T-cell (primary cell): ENCODE measurements at regions of chr3 and their contacts with region 1.

Region 1: GRCh38 chr3:152268555-152269425 is at the start of gene MBNL1:
- DNase-seq: peak; percentile 74 to 93 (median 82)
- ATAC-seq: peak; percentile 71 to 80 (median 78)
- H3K4me3 ChIP-seq: peak within 1 kb of the TSS; percentile 77 to 99
- H3K4me3 Mint-ChIP-seq: peak within 1 kb of the TSS; percentile 85 to 99 (median 86)
- H3K27ac ChIP-seq: peak within 1 kb of the TSS; percentile 95
- H3K27ac Mint-ChIP-seq: peak within 1 kb of the TSS; percentile 94
- H3K4me1 ChIP-seq: peaks cover 21 to 58% of the 10 kb centered on the region in 2 experiments
- H3K4me1 Mint-ChIP-seq: peaks cover 62 to 76% (median 63%) of the 10 kb centered on the region in 3 donors
- H3K27me3 ChIP-seq: no peaks in the 10 kb centered on the region
- H3K27me3 Mint-ChIP-seq: no peaks in the 10 kb centered on the region
- total RNA-seq, gene MBNL1: 408 to 705 (median 423) TPM

Region 2: DNA sequence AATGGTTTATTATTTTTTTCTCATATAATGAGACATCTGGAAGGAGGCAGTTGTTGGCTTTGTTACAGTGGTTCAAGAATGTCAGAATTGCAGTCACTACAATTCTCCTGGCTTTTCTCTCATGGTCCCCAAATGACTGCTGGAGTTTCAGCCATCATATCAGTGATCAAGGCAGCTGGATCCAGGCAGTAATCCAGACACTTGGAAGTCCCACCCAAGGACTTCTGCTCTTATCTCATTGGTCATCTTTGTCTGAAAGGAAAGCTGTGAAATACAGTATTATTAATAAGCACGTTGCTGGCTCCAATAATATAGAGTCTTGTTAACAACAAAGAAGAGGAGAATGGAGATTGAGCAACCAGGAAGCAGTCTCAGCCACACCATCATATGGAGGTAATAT is 1206.2 kb before region 1 on chr3:
- CTCF ChIA-PET with region 1: no interaction called
- POLR2A ChIA-PET with region 1: no interaction called
- DNase-seq: no peak
- ATAC-seq: no peak
- H3K4me3 ChIP-seq: no peak overlapping the region
- H3K4me3 Mint-ChIP-seq: no peak overlapping the region
- H3K27ac ChIP-seq: no peak overlapping the region
- H3K27ac Mint-ChIP-seq: no peak overlapping the region
- H3K4me1 ChIP-seq: no peaks in the 10 kb centered on the region
- H3K4me1 Mint-ChIP-seq: no peaks in the 10 kb centered on the region
- H3K27me3 ChIP-seq: peaks cover 0 to 3% of the 10 kb centered on the region in 2 experiments
- H3K27me3 Mint-ChIP-seq: peaks cover 6 to 21% of the 10 kb centered on the region in 2 donors

Region 3: DNA sequence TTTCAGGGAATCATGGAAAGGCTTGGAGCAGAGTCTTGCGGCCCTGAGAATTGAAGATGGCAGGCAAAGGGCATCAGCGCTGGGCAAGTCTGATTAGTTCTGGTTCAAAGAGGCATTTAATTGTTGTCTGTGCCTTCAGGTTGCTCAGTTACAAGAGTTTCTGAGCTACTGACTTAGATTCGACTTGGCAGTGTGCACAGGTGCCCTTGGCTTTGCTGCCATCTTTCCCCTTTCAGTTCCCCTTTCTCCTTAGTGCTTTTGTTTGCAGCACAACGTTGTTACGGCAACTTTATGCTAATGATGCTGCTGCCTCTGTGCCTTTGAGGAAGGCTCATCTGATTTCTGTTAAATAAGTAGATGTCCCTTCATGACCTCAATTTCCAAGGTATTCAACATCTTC is 1002.9 kb before region 1 on chr3:
- CTCF ChIA-PET with region 1: no interaction called
- POLR2A ChIA-PET with region 1: no interaction called
- DNase-seq: peak in 3 of 35 experiments; percentile 3 to 48 (median 6)
- ATAC-seq: peak in 1 of 4 experiments; percentile 42
- H3K4me3 ChIP-seq: no peak overlapping the region
- H3K4me3 Mint-ChIP-seq: no peak overlapping the region
- H3K27ac ChIP-seq: no peak overlapping the region
- H3K27ac Mint-ChIP-seq: no peak overlapping the region
- H3K4me1 ChIP-seq: peaks cover 4 to 5% of the 10 kb centered on the region in 2 experiments
- H3K4me1 Mint-ChIP-seq: peaks cover 13 to 30% (median 18%) of the 10 kb centered on the region in 3 donors
- H3K27me3 ChIP-seq: no peaks in the 10 kb centered on the region
- H3K27me3 Mint-ChIP-seq: peaks cover 1 to 3% of the 10 kb centered on the region in 2 donors

Region 4: DNA sequence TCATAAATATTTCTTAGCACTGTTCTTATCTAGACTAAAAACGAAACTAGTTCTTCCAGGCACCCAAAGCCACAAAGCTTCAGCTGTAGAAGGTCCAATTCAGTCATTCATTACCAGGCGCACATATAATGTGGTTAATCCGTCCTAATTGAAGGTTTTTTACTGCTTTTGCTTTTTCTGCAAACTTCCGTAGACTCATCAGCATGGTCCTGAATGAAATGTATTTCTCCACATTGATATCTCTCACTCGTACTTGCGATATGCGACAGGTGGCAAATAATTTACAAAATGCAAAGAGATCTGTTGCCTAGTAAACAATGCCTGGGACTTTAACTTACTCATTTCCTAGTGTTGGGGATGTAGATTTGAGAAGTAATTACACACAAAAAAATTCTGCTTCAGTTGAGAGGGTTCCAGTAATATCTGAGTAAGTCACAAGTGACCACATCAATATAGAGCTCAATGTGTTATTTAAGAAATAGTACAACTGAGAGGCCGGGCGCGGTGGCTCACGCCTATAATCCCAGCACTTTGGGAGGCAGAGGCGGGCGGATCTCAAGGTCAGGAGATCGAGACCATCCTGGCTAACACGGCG is 75.0 kb before region 1 on chr3:
- CTCF ChIA-PET with region 1: interaction called in 1 of 2 experiments, 6 read pairs
- POLR2A ChIA-PET with region 1: interaction called in 1 of 2 experiments, 23 read pairs
- DNase-seq: peak in 12 of 35 experiments; percentile 11 to 74 (median 30)
- ATAC-seq: peak; percentile 62 to 70 (median 66)
- H3K4me3 ChIP-seq: peak overlapping the region; percentile 42 to 66
- H3K4me3 Mint-ChIP-seq: peak overlapping the region; percentile 71 to 83 (median 79)
- H3K27ac ChIP-seq: peak overlapping the region; percentile 70
- H3K27ac Mint-ChIP-seq: peak overlapping the region; percentile 90 to 98
- H3K4me1 ChIP-seq: peaks cover 33 to 41% of the 10 kb centered on the region in 2 experiments
- H3K4me1 Mint-ChIP-seq: peaks cover 81 to 91% (median 85%) of the 10 kb centered on the region in 3 donors
- H3K27me3 ChIP-seq: no peaks in the 10 kb centered on the region
- H3K27me3 Mint-ChIP-seq: no peaks in the 10 kb centered on the region

Region 5: DNA sequence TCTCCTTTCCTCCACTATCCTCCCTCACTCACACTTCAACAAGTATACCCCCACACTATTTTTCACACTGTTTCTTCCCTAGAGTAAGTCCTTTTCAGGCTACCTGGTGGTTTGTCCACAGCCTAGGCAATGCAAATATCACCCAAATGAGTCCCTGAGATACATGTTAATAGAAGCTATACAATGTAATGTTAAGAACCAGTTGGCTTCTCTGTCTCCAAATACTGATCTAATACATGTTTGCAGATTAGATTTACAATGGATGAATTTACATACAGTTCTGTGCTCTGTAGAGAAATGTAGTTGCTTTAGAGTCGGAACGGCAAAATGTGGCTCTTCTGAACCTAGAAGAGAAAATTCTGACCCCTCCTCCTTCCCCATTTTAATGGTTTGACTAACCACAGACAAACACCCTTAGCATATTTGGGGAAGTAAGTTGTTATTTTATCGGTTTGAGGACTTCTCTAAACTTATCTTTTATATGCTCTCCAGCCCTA is 63.6 kb before region 1 on chr3:
- CTCF ChIA-PET with region 1: no interaction called
- POLR2A ChIA-PET with region 1: interaction called, 13 to 23 read pairs
- DNase-seq: peak in 2 of 35 experiments; percentile 29 to 56
- ATAC-seq: peak; percentile 36 to 63 (median 54)
- H3K4me3 ChIP-seq: peak overlapping the region; percentile 2 to 50
- H3K4me3 Mint-ChIP-seq: peak overlapping the region; percentile 83 to 95 (median 83)
- H3K27ac ChIP-seq: peak overlapping the region; percentile 78
- H3K27ac Mint-ChIP-seq: peak overlapping the region; percentile 97 to 100
- H3K4me1 ChIP-seq: peaks cover 12 to 51% of the 10 kb centered on the region in 2 experiments
- H3K4me1 Mint-ChIP-seq: peaks cover 76 to 84% (median 76%) of the 10 kb centered on the region in 3 donors
- H3K27me3 ChIP-seq: no peaks in the 10 kb centered on the region
- H3K27me3 Mint-ChIP-seq: no peaks in the 10 kb centered on the region

Region 6: DNA sequence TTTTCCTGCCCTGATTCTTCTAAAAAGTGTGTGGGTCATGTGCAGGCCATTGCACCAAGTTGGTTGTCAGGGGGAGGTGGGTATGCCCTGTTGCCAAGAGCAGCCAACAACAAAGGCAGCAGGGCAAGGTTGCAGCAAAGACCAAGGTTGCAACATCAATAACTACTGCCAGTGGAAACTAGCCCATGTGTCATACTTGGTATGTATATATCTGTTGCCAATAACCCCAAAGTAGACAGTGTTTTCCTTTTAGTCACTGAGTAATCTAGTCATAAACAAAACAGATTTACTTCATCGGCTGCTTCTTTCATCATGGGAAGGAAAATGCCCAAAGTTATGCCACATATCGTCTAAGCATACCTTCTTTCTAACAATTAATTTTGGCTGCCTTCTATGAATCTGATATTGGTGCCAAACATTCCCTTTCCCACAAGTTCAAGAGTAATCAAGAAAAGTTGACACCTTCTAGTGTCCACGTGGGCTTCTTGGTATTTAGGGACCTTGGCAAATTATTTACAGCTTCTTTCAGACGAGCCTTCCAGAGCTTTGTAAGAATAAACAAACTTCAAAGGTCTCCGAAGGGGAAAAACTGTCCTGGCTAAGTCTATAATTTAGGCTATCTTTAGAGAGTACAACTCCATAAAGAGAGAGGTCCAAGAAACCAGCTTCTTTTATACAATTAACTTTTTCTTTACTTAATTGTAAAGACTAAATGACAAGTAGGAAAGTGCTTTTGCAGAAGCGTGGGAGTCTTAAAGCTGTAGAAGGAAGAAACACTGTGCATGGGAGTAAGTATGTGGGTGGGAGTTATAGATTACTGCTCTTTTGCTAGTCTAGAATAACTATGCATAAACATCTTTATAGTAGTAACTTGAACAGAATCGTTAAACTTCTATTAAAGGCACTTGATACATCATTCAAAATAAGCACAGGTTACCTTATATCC is 10.1 kb before region 1 on chr3:
- CTCF ChIA-PET with region 1: interaction called in 1 of 2 experiments, 17 read pairs
- POLR2A ChIA-PET with region 1: interaction called, 4 to 51 read pairs
- DNase-seq: peak in 31 of 35 experiments; percentile 22 to 73 (median 50)
- ATAC-seq: peak; percentile 46 to 76 (median 53)
- H3K4me3 ChIP-seq: peak overlapping the region; percentile 16 to 29
- H3K4me3 Mint-ChIP-seq: peak overlapping the region; percentile 63 to 72 (median 64)
- H3K27ac ChIP-seq: peak overlapping the region; percentile 94
- H3K27ac Mint-ChIP-seq: peak overlapping the region; percentile 97
- H3K4me1 ChIP-seq: peaks cover 53 to 72% of the 10 kb centered on the region in 2 experiments
- H3K4me1 Mint-ChIP-seq: peaks cover 87 to 92% (median 90%) of the 10 kb centered on the region in 3 donors
- H3K27me3 ChIP-seq: no peaks in the 10 kb centered on the region
- H3K27me3 Mint-ChIP-seq: no peaks in the 10 kb centered on the region

Region 7: DNA sequence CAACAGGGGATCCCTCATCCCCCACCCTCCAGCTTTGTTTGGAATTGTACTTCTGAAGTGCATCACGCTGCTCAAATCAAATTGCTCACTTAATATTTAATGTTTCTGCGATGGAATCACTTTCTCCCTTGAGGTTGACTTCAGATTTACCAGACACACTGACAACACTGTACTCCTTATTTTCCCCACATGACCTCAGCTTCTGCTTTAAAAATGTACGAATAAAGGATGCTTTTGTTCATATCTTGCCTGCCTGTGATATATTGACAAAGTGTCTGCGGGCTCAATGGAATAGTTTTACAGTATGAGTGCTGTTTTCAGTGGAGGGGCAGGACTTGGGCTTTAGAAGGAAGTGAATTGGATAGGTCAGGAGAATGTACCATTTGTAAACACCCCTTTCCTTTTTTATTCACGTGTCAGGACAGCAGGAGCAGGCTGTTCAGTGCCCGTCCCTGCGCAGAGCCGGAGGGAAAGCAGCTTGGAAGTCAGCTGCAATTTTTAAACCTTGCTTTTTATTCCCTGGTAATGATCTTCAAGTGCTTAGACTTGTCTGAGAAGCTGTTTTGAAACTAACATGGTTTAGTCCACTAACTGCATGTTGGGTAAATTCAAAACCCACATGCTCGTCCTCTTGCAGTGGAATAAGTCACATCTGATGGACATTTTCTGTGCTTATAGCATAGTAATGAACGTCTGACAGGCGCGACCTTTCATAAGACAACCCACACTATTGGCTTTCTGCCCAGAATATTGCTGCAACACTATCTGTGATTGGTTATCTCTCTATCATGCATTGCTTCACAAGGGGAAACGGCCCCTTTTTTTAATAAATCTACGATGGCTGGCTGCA is 29.8 kb after region 1 on chr3:
- CTCF ChIA-PET with region 1: interaction called, 4 to 5 read pairs
- POLR2A ChIA-PET with region 1: interaction called, 3 to 11 read pairs
- DNase-seq: peak in 31 of 35 experiments; percentile 10 to 89 (median 54)
- ATAC-seq: peak; percentile 73 to 78 (median 76)
- H3K4me3 ChIP-seq: peak overlapping the region in 1 of 2 donors; percentile 1
- H3K4me3 Mint-ChIP-seq: peak overlapping the region; percentile 59 to 78 (median 72)
- H3K27ac ChIP-seq: peak overlapping the region; percentile 54
- H3K27ac Mint-ChIP-seq: peak overlapping the region; percentile 90 to 92
- H3K4me1 ChIP-seq: peaks cover 51 to 67% of the 10 kb centered on the region in 2 experiments
- H3K4me1 Mint-ChIP-seq: peaks cover 79 to 89% (median 88%) of the 10 kb centered on the region in 3 donors
- H3K27me3 ChIP-seq: no peaks in the 10 kb centered on the region
- H3K27me3 Mint-ChIP-seq: no peaks in the 10 kb centered on the region

Region 8: DNA sequence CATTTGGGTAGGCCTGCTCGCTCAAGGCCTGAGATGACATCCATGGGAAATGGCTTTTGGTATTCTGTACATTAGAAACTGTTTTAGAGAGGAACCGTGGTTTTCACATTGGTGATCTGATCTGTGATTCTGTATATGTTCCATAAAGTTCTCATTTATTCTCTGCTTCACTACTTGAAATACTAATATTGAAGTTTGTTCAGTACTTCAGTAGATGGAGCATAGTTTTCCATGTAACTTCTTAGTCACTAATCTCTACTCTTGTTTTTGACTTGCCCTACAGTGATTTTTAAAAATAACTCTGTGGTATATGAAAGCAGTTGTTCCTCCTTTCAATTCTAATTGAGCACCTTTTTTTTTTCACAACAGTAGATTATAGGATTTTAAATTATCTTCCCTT is 66.5 kb after region 1 on chr3:
- CTCF ChIA-PET with region 1: no interaction called
- POLR2A ChIA-PET with region 1: interaction called in 1 of 2 experiments, 11 read pairs
- DNase-seq: no peak
- ATAC-seq: peak in 2 of 4 experiments; percentile 11 to 23
- H3K4me3 ChIP-seq: no peak overlapping the region
- H3K4me3 Mint-ChIP-seq: peak overlapping the region in 2 of 3 donors; percentile 17 to 36
- H3K27ac ChIP-seq: peak overlapping the region; percentile 11
- H3K27ac Mint-ChIP-seq: peak overlapping the region; percentile 66 to 68
- H3K4me1 ChIP-seq: peaks cover 16 to 29% of the 10 kb centered on the region in 2 experiments
- H3K4me1 Mint-ChIP-seq: peaks cover 87 to 91% (median 90%) of the 10 kb centered on the region in 3 donors
- H3K27me3 ChIP-seq: no peaks in the 10 kb centered on the region
- H3K27me3 Mint-ChIP-seq: no peaks in the 10 kb centered on the region

Region 9: GRCh38 chr3:152574461-152575079 is 305.8 kb after region 1 on chr3:
- CTCF ChIA-PET with region 1: no interaction called
- POLR2A ChIA-PET with region 1: no interaction called
- DNase-seq: peak in 13 of 35 experiments; percentile 1 to 43 (median 13)
- ATAC-seq: no peak
- H3K4me3 ChIP-seq: no peak overlapping the region
- H3K4me3 Mint-ChIP-seq: no peak overlapping the region
- H3K27ac ChIP-seq: no peak overlapping the region
- H3K27ac Mint-ChIP-seq: no peak overlapping the region
- H3K4me1 ChIP-seq: no peaks in the 10 kb centered on the region
- H3K4me1 Mint-ChIP-seq: no peaks in the 10 kb centered on the region
- H3K27me3 ChIP-seq: no peaks in the 10 kb centered on the region
- H3K27me3 Mint-ChIP-seq: peaks cover 18% of the 10 kb centered on the region in 2 donors